Activated CD4-positive, alpha-beta T cell treated with anti-CD3 and anti-CD28 coated beads for 36 hours (primary cell): ENCODE measurements at regions of chr10 and their contacts with region 1.

Region 1: DNA sequence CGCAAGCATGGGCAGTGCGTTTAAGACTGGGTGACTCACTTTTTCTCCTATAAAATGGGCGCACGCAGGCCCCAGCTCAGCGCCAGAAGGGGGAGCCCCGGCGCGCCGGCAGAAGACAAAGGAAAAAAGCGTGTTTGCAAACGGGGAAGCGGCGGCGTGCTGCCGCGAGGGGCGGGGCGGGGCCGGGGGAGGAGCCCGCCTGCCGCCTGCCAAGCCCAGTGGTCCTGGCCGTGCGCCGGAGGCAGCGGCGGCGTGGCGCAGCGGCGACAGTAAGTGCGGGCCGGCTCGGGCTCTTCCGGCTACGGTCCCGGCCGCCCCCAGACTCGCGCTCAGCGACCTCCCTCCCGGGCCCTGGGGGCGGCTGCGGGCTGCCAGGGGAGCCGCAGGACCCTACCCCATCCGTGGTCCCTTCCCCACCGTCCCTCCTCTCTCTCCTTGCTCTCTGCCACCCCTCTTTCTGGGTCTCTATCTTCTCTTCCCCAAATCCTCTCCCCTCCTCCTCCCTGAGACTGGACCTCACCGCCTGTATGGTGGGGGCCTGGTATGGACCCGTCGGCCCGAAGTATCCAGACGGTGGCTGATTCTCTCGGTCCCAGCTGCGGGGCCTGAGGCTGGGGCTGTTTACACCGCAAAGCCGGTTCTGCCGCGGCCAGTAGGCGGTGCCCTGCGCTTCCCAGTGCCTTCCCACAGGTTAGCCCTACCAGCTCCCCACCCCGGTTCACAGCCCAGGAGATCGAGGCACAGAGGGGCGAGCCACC is at the start of gene SLC29A3:
- DNase-seq: peak; percentile 94
- ATAC-seq: peak; percentile 87
- H3K4me3 Mint-ChIP-seq: peak within 1 kb of the TSS; percentile 85
- H3K27ac Mint-ChIP-seq: peak within 1 kb of the TSS; percentile 77
- H3K4me1 Mint-ChIP-seq: peaks cover 33% of the 10 kb centered on the region
- H3K27me3 Mint-ChIP-seq: no peaks in the 10 kb centered on the region
- total RNA-seq, gene SLC29A3: 2.4 to 2.6 TPM

Region 2: DNA sequence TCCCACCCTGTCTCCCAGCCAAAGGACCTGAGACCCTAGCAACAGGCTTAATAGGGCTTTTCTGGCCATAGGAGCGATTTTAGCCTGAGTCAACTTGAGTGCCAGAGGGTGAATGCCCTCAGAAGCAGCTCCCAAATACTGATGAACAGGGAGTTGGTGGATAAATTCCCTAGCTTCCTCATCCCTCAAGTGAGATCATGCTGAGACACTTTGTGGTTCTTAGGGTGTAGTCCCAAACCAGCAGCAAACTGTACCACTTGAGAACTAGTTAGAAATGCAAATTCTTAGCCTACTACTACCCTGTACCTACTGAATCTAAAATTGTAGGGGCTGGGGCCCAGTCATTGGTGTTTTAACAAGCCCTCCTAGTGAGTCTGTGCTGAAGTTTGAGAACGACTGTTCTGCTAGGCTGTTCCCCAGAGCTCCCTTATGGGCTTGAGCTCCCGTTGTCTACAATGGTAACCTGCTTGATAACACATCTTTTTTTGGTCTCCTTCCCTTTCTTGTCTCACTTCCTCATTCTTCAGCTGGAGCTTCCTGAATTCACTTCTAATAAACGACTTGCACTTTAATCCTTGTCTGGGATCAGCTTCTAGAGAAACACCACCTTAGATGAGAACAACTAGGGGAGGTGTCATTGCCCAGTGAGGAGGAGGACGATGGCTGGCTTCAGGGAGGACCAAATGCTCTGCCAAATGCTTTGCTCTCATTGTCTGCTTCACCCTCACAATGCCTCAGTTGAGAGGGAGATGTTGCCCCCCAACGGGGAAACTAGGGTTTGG is 59.3 kb after region 1 on chr10:
- CTCF ChIA-PET with region 1: interaction called, 12 read pairs
- POLR2A ChIA-PET with region 1: no interaction called
- intact Hi-C with region 1: loop called (anchors 1 to 2 kb)
- DNase-seq: no peak
- ATAC-seq: no peak
- H3K4me3 Mint-ChIP-seq: no peak overlapping the region
- H3K27ac Mint-ChIP-seq: no peak overlapping the region
- H3K4me1 Mint-ChIP-seq: peaks cover 4% of the 10 kb centered on the region
- H3K27me3 Mint-ChIP-seq: no peaks in the 10 kb centered on the region

Region 3: DNA sequence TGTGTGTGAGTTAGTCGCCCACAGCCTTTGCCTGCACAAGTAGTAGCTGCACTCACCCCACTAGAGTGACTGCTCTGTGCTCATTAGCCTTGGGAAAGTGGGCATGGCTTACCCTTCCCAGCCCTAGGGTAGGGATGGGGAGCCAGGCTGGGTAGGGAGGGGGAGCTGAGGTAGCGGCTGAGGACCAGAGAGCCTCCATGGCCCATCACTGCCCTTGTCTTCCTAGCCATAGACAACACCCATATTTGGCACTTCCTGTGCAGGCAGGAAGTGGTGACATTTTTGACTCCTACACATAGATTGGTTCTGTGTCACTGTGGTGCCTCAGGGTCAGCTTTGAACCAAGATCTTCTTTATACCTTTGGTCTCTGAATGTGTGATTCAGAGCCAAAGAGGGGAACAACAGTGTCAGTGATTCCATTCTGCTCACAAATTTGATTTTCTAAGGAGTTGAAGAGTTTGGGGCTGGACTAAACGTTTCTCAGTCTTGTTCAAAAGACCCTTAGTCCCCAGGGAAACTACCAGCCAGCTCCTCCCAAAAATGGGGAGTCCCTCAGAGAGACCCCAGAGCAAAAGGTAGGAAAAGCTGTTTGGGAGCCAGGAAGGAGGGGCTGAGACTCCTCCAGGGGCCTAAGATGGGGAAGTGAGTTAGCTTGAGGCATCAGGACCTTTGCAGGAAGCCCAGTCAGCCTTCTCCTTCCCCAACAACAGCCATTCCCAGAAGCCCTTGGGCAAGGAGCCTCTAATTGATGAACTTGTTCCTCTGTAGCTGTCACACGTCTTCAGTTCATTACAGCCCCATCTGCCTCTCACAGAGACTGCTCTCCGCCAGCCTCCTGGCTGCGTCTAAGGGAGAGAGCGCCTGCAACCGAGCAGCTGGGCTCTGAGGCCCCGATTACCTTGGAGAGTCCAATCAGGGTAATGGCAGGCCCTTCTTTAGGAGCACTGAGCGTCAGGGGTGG is 212.5 kb after region 1 on chr10:
- CTCF ChIA-PET with region 1: no interaction called
- POLR2A ChIA-PET with region 1: no interaction called
- intact Hi-C with region 1: loop called in 1 of 2 experiments (anchors 1 kb)
- DNase-seq: peak; percentile 73
- ATAC-seq: peak; percentile 98
- H3K4me3 Mint-ChIP-seq: no peak overlapping the region
- H3K27ac Mint-ChIP-seq: peak overlapping the region; percentile 92
- H3K4me1 Mint-ChIP-seq: peaks cover 23% of the 10 kb centered on the region
- H3K27me3 Mint-ChIP-seq: no peaks in the 10 kb centered on the region

Region 4: GRCh38 chr10:71608819-71609768 is 289.9 kb after region 1 on chr10:
- CTCF ChIA-PET with region 1: interaction called, 4 read pairs
- POLR2A ChIA-PET with region 1: no interaction called
- intact Hi-C with region 1: loop called (anchors 1 to 10 kb)
- DNase-seq: peak; percentile 86
- ATAC-seq: peak; percentile 71
- H3K4me3 Mint-ChIP-seq: no peak overlapping the region
- H3K27ac Mint-ChIP-seq: no peak overlapping the region
- H3K4me1 Mint-ChIP-seq: peaks cover 2% of the 10 kb centered on the region
- H3K27me3 Mint-ChIP-seq: no peaks in the 10 kb centered on the region

Region 5: DNA sequence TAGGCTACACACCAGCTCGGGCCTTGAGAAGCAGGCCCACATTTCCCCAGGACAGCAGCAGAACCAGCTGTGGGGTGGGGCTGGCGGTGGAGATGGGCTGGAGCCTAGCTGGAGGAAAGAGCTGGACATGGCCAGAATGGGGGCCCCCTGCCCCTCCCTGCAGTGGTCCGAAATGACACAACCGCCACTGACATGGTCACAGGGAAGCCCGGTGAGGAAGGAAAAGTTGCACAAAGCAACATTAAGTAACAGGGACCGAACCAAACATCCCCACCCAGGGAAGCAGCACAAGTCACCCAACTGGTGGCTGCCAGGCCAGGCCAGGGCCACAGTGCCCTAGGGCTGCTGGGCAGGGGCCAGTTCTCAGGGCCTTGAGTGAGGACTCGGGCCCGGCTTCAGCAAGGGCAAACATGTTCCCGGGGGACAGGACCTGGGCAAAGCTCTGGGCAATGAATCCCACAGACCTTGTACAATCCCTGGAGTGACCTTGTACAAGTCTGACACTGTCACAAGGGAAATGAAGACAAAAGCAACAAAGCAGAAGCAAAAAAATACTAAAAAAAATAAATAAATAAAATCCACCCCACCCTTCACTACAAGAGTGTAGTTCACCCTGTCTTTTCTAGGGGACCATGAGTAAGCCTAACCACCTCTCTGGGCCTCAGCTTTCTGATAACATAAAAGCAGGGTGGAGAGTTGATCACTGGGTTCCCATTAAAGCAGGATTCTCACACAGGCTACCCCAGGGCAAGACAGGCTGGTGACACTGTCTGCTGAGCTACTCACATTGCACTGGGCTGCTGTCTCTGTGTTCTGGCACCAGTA is 498.8 kb after region 1 on chr10:
- CTCF ChIA-PET with region 1: no interaction called
- POLR2A ChIA-PET with region 1: no interaction called
- intact Hi-C with region 1: loop called in 1 of 2 experiments (anchors 5 kb)
- DNase-seq: no peak
- ATAC-seq: no peak
- H3K4me3 Mint-ChIP-seq: no peak overlapping the region
- H3K27ac Mint-ChIP-seq: no peak overlapping the region
- H3K4me1 Mint-ChIP-seq: peaks cover 11% of the 10 kb centered on the region
- H3K27me3 Mint-ChIP-seq: no peaks in the 10 kb centered on the region